ENCODE measurements at regions of chr17 and their contacts with region 1.

Region 1: GRCh38 chr17:39603304-39604016 is 4.3 kb downstream of the NEUROD2 start:
- DNase-seq: no peak
- H3K4me3 ChIP-seq: no peak overlapping the region
- H3K4me3 Mint-ChIP-seq: peak overlapping the region in 1 of 2 donors; percentile 85
- H3K27ac ChIP-seq: no peak overlapping the region
- H3K27ac Mint-ChIP-seq: no peak overlapping the region
- H3K4me1 ChIP-seq: peaks cover 3 to 5% of the 10 kb centered on the region in 2 donors
- H3K4me1 Mint-ChIP-seq: peaks cover 19% of the 10 kb centered on the region
- H3K27me3 ChIP-seq: peaks cover 86 to 99% of the 10 kb centered on the region in 2 donors
- H3K27me3 Mint-ChIP-seq: peaks cover 85 to 98% (median 96%) of the 10 kb centered on the region in 3 donors
- CTCF ChIP-seq: no peak

Region 2: DNA sequence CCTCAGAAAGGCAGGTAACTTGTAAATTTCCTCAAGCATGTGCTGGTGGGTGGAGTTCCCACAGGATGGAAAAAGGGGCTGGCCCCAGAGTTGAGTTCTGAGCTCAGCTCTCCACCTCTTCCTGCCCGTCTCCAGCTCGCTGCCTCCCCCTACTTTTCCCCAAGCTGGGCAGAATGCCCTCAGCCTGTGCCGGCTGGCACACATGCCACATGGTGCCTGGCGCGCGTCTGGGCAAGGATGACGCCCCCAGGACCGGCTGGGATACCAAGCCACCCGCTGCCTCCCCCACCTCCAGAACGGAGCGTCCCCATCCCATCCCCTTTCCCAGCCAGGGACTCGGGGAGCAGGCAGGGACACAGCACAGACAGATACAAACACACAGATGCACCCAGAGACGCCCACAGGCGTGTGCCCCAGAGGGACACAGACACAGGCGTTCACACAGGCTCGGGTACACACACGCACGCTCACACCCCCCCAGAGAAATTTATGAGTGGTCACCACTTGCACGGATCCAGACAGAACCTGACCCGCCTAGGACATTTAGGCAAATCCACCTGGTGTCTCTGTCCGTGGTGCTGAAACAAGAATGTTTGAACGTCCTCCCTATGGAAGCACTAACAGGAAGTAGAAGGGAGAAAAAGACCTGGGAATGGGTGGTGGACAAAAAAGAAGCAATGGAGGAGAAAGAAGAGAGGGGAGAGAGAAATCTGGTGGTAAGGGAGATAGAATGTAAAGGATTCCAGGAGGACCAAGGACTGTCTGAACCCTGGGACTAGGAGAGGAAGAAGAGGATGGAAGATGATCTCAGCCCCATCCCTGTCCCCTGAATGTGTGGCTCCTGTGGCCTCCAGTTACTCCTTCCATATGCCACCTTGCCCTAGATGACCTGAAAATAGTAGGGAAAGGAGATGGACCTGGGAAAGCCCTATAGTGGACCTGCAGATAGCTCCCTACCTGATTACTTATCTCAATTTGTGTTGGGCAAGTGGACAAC is 11.2 kb before region 1 on chr17:
- intact Hi-C with region 1: loop called in 1 of 2 experiments (anchors 2 kb)
- DNase-seq: no peak
- H3K4me3 ChIP-seq: no peak overlapping the region
- H3K4me3 Mint-ChIP-seq: no peak overlapping the region
- H3K27ac ChIP-seq: no peak overlapping the region
- H3K27ac Mint-ChIP-seq: no peak overlapping the region
- H3K4me1 ChIP-seq: no peaks in the 10 kb centered on the region
- H3K4me1 Mint-ChIP-seq: no peaks in the 10 kb centered on the region
- H3K27me3 ChIP-seq: peaks cover 29 to 49% of the 10 kb centered on the region in 2 donors
- H3K27me3 Mint-ChIP-seq: peaks cover 61 to 75% (median 61%) of the 10 kb centered on the region in 3 donors
- CTCF ChIP-seq: no peak

Region 3: GRCh38 chr17:39730095-39730921 is 126.8 kb after region 1 on chr17 and contains the start of gene MIEN1:
- intact Hi-C with region 1: no loop called
- DNase-seq: peak; percentile 83 to 88 (median 84)
- H3K4me3 ChIP-seq: peak within 1 kb of the TSS; percentile 69 to 95 (median 86)
- H3K4me3 Mint-ChIP-seq: peak within 1 kb of the TSS; percentile 84 to 90
- H3K27ac ChIP-seq: peak within 1 kb of the TSS; percentile 48 to 96
- H3K27ac Mint-ChIP-seq: peak within 1 kb of the TSS; percentile 87 to 94 (median 91)
- H3K4me1 ChIP-seq: peaks cover 9 to 13% of the 10 kb centered on the region in 2 donors
- H3K4me1 Mint-ChIP-seq: peaks cover 9% of the 10 kb centered on the region
- H3K27me3 ChIP-seq: peaks cover 0 to 5% of the 10 kb centered on the region in 2 donors
- H3K27me3 Mint-ChIP-seq: peaks cover 11 to 19% (median 17%) of the 10 kb centered on the region in 3 donors
- CTCF ChIP-seq: peak; percentile 97
- polyA plus RNA-seq, gene MIEN1: 61.7 to 141 (median 124) TPM